IMR-90 (cell line): ENCODE measurements at regions of chr13 and their contacts with region 1.

Region 1: GRCh38 chr13:98576963-98577822 is at the start of gene STK24:
- DNase-seq: peak; percentile 74
- ATAC-seq: peak; percentile 88
- H3K4me3 ChIP-seq: peak within 1 kb of the TSS; percentile 74
- H3K27ac ChIP-seq: peak within 1 kb of the TSS; percentile 88
- H3K4me1 ChIP-seq: peaks cover 7% of the 10 kb centered on the region
- H3K27me3 ChIP-seq: no peaks in the 10 kb centered on the region
- CTCF ChIP-seq: 0 out of 2 replicates have a peak, but pooled peaks have one; percentile 2
- POLR2A ChIP-seq: peak; percentile 77
- RAD21 ChIP-seq: no peak
- total RNA-seq, gene STK24: 29.2 and 36.1 TPM in 2 replicates

Region 2: DNA sequence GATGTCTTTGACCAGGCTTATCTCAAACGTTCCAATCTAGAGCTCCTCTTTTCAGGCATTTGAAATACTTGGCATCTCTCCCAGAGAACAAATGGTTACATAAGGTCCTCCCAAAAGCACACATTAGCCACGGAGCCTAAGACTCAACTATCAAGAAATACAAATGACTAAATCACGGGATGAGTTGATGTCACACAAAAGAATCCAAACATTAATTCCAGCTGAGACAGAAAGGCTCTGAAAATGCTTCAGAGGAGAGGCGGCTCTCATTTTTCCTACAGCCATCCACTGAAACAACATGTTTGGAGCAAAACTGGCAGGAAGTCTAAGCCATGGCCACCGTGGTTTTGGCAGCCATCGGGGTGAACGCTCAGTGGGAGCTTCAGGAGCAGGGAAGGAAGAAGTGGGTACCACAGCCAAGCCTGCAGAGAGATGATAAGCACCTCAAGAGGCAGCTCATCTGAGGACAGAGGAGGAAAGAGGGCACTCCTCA is 122.8 kb before region 1 on chr13:
- CTCF ChIA-PET with region 1: no interaction called
- POLR2A ChIA-PET with region 1: no interaction called
- dilution Hi-C with region 1: no loop called
- in situ Hi-C with region 1: no loop called
- intact Hi-C with region 1: loop called (anchors 2 kb)
- DNase-seq: peak; percentile 94
- ATAC-seq: peak; percentile 75
- H3K4me3 ChIP-seq: no peak overlapping the region
- H3K27ac ChIP-seq: peak overlapping the region; percentile 91
- H3K4me1 ChIP-seq: peaks cover 14% of the 10 kb centered on the region
- H3K27me3 ChIP-seq: no peaks in the 10 kb centered on the region
- CTCF ChIP-seq: no peak
- POLR2A ChIP-seq: no peak
- RAD21 ChIP-seq: no peak

Region 3: GRCh38 chr13:98484289-98485219 is 92.6 kb before region 1 on chr13:
- CTCF ChIA-PET with region 1: no interaction called
- POLR2A ChIA-PET with region 1: no interaction called
- dilution Hi-C with region 1: no loop called
- in situ Hi-C with region 1: no loop called
- intact Hi-C with region 1: loop called (anchors 5 kb)
- DNase-seq: peak; percentile 95
- ATAC-seq: peak; percentile 64
- H3K4me3 ChIP-seq: no peak overlapping the region
- H3K27ac ChIP-seq: peak overlapping the region; percentile 27
- H3K4me1 ChIP-seq: peaks cover 45% of the 10 kb centered on the region
- H3K27me3 ChIP-seq: no peaks in the 10 kb centered on the region
- CTCF ChIP-seq: no peak
- POLR2A ChIP-seq: peak; percentile 47; the same call in 1 of the 2 replicates
- RAD21 ChIP-seq: 0 out of 2 replicates have a peak, but pooled peaks have one; percentile 6

Region 4: DNA sequence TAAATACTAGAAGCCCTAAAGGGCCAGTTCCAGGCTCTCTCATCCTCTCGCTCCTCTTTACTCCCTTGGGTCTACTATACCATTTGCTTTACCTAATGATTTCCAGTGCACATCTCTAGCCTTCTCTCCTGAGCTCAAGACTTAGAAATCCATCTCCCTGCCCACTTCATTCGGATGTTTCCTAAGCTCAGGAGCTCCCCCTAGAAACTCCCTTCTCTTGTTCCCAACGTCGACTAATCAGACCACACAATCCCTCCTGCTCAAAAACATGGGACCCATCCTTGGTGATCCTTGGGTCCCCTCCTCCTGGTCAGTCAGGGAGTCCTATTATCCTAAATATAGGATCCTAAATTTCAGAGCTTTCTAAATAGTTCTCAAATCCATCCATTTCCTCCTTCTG is 20.9 kb after region 1 on chr13:
- CTCF ChIA-PET with region 1: no interaction called
- POLR2A ChIA-PET with region 1: no interaction called
- dilution Hi-C with region 1: no loop called
- in situ Hi-C with region 1: no loop called
- intact Hi-C with region 1: loop called (anchors 2 kb)
- DNase-seq: no peak
- ATAC-seq: no peak
- H3K4me3 ChIP-seq: no peak overlapping the region
- H3K27ac ChIP-seq: no peak overlapping the region
- H3K4me1 ChIP-seq: no peaks in the 10 kb centered on the region
- H3K27me3 ChIP-seq: peaks cover 3% of the 10 kb centered on the region
- CTCF ChIP-seq: no peak
- POLR2A ChIP-seq: no peak
- RAD21 ChIP-seq: no peak

Region 5: DNA sequence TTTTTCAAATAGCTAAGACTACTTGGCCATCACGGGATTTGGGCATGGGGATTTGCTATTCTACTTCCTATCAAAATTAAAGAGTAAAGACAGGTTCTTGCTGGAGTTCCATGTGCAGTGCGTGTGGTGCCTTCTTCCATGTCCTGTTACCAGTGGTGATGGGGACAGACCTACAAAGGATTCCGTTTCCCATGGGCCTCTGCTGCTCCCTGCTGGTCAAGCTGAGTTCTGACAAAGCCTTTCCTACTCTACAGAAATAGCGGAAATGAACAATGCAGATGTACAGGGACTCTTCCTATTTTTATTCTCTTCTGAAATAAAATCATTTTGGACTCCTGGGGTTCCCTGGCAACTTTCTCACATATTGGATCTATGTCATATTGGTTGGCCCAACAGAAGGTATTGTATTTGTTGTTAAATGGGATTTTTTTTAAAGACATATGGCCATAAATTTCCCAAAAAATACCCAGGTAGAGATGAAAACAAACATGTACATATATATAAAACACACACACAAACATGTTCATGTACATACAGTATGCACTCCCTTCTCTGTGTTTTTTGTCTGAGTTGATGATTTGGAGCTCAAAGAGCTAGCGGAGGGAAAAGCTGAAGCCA is 265.8 kb after region 1 on chr13:
- CTCF ChIA-PET with region 1: no interaction called
- POLR2A ChIA-PET with region 1: no interaction called
- dilution Hi-C with region 1: no loop called
- in situ Hi-C with region 1: no loop called
- intact Hi-C with region 1: loop called (anchors 5 kb)
- DNase-seq: peak; percentile 80
- ATAC-seq: peak; percentile 89
- H3K4me3 ChIP-seq: no peak overlapping the region
- H3K27ac ChIP-seq: no peak overlapping the region
- H3K4me1 ChIP-seq: peaks cover 4% of the 10 kb centered on the region; the same call in 1 of the 2 replicates
- H3K27me3 ChIP-seq: no peaks in the 10 kb centered on the region
- CTCF ChIP-seq: peak; percentile 88
- POLR2A ChIP-seq: no peak
- RAD21 ChIP-seq: peak; percentile 89